Activated CD4-positive, alpha-beta memory T cell treated with anti-CD3 and anti-CD28 coated beads for 36 hours (primary cell): ENCODE measurements at regions of chr4 and their contacts with region 1.

Region 1: DNA sequence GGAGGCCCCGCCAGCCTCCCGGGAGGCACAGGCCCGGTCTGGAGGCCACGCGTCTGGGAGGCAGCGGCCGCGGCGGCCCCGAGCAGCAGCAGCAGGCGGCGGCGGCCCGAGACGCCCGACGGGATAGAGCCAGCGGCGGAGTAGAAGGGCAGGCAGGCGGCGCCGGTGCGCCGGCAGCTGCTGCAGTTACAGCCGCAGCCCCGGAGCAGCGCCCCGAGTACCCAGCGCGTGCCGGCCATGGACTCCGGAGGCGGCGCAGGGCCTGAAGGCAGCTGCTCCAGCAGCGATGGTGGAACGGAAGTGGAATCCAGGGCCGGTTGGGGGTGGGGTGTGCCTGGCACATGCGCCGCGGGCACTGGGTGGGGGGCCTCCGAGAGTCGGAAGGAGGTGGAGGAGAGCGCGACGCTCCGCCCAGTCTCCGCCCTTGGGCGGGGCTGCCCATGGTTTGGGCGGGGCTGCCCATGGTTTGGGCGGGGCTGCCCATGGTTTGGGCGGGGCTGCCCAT is at the start of gene GRSF1:
- DNase-seq: peak; percentile 97
- H3K4me3 Mint-ChIP-seq: peak within 1 kb of the TSS; percentile 98
- H3K27ac Mint-ChIP-seq: peak within 1 kb of the TSS; percentile 99
- H3K4me1 Mint-ChIP-seq: peaks cover 31% of the 10 kb centered on the region
- H3K27me3 Mint-ChIP-seq: no peaks in the 10 kb centered on the region
- total RNA-seq, gene GRSF1: 97.8 to 97.9 TPM

Region 2: DNA sequence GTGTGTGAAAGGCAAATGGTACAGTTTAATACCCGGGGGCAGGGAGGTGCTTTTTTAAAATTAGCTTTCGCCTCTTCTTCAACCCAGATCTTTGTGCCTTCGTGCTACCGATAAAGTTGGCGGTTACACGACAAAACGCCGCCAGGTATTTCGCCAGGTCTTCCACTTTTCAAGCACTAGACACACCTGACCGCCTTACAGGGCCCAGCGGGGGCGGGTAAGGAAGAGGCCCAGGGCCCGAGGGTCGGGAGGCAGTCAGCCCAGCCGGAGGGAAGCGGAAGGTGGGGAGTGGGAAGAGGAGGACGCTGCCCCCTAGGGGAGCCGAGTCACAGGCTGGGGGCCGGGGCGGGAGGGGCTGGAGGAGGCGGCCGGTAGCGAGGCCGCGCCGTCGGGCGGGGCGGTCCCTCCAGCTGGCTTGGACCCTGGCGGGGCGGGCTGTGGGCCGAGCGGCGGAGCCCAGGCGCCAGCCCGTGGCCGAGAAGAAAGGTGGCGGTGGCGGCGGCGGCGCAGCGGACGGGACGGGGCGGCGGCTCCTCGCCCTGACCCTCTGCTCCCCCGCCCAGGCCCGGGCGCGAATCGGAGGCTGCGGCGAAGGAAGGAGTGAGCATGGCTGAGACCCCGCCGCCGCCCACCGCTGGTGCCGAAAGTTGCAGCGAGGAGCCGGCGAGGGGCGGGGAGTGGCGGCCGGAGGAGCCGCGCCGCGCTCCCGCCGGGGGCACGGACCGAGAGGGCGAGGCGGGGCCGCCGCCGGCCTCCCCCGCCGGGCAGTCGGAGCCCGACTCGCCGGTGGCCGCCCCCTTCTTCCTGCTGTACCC is 135.1 kb before region 1 on chr4:
- CTCF ChIA-PET with region 1: interaction called, 8 read pairs
- POLR2A ChIA-PET with region 1: interaction called, 8 read pairs
- intact Hi-C with region 1: loop called (anchors 1 kb)
- DNase-seq: peak; percentile 75
- H3K4me3 Mint-ChIP-seq: peak overlapping the region; percentile 85
- H3K27ac Mint-ChIP-seq: peak overlapping the region; percentile 80
- H3K4me1 Mint-ChIP-seq: peaks cover 25% of the 10 kb centered on the region
- H3K27me3 Mint-ChIP-seq: no peaks in the 10 kb centered on the region

Region 3: DNA sequence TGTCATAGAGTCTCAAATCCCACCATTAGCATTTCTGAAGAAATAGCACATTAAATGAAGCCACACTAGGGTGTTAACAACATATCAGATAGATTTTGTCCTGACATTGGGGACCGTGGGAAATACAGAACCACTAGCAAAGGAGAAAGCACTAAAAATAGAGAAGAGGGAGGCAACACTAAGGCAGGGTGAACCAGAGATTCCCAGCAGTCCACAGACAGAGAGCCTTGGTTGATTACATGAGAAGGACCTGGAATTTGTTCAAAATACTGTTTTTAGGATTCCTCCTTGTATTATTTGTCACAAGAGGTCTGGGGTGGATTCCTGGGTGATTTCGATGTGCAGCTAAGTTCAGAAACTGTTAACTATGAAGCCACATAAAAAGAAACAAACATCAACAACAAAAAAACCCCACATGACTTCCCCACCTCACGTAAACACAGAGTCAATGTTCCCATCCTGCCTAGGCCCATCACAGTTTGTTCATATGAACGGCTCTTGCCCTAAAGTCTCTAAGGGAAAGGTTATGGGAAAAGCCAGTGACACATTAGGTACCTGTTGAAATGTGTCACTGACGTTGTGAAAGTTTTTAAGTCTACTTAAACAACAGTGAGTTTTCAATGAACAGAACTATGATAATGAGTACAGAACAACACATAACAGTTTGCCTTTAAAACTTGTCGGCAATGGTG is 23.6 kb after region 1 on chr4:
- CTCF ChIA-PET with region 1: no interaction called
- POLR2A ChIA-PET with region 1: no interaction called
- intact Hi-C with region 1: loop called (anchors 1 kb)
- DNase-seq: peak; percentile 39
- H3K4me3 Mint-ChIP-seq: no peak overlapping the region
- H3K27ac Mint-ChIP-seq: peak overlapping the region; percentile 57
- H3K4me1 Mint-ChIP-seq: peaks cover 12% of the 10 kb centered on the region
- H3K27me3 Mint-ChIP-seq: no peaks in the 10 kb centered on the region

Region 4: DNA sequence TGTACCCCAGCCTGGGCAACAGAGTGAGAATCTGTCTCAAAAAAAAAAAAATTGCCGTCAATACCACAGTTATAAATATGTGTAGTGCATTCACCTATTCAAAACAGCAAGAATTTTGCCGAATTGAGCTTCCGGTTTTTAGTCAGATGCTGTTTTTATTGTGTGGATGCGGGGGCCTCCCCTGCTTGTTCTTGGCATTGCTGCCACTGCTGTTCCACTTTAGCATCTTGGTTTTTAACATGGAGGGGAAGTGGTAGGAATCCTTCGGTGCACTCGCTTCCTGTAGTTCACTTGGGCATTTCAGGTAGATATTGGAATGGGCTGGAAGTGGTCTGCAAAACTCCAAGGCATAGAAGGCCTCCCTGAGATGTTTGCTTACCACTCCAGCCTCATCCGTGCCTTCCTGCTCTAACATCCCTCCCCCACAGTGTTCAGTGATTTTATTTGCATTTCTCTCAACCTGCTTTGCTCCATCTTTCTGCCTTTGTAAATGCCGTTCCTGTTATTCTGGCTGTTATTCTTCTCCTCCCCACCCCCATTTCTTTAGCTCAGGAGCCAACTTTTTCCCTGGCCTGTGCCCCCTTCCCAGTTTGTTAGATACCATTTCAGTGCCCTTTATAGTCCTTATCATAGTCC is 88.0 kb after region 1 on chr4:
- CTCF ChIA-PET with region 1: no interaction called
- POLR2A ChIA-PET with region 1: no interaction called
- intact Hi-C with region 1: loop called (anchors 5 kb)
- DNase-seq: peak; percentile 60
- H3K4me3 Mint-ChIP-seq: no peak overlapping the region
- H3K27ac Mint-ChIP-seq: no peak overlapping the region
- H3K4me1 Mint-ChIP-seq: peaks cover 31% of the 10 kb centered on the region
- H3K27me3 Mint-ChIP-seq: no peaks in the 10 kb centered on the region

Region 5: GRCh38 chr4:71004281-71004851 is 164.7 kb after region 1 on chr4:
- CTCF ChIA-PET with region 1: interaction called, 3 read pairs
- POLR2A ChIA-PET with region 1: no interaction called
- intact Hi-C with region 1: loop called (anchors 1 kb)
- DNase-seq: peak; percentile 72
- H3K4me3 Mint-ChIP-seq: peak overlapping the region; percentile 4
- H3K27ac Mint-ChIP-seq: peak overlapping the region; percentile 64
- H3K4me1 Mint-ChIP-seq: peaks cover 79% of the 10 kb centered on the region
- H3K27me3 Mint-ChIP-seq: no peaks in the 10 kb centered on the region